GM10248 (cell line): ENCODE measurements at regions of chr10 and their contacts with region 1.

Region 1: DNA sequence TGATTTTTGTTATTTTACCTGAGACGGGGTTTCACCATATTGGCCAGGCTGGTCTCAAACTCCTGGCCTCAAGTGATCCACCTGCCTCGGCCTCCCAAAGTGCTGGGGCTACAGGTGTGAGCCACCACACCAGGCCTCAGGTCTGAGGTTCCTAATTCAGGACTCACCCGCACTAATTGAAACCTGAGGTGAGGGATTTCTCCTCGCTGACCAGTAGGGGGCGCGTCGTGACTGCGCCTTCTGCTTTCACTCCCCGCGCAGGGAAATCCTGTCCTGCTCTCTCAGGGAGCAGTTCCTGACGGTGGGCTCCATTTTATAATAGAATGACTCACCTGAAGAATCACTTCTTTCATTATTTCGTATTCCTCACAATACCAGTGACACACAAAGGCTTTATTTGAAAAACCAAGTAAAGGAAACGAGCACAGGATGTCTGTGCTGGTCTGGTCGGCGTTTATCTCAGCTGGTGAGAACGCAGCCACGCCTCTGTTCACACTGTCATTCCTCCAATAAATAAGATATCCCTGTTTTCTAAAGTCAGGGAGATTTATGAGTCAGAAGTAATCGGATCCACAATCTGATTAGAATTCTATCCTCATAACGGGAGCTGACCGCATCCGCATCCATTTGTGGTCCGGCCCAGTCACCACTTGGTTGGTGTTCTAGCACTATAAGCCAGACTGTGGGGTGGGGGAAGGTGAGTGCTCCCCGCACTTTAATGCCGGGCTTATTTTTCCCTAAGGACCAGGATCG is 35.4 kb downstream of the BAG3 start:
- DNase-seq: peak; percentile 81
- CTCF ChIP-seq: peak; percentile 92

Region 2: DNA sequence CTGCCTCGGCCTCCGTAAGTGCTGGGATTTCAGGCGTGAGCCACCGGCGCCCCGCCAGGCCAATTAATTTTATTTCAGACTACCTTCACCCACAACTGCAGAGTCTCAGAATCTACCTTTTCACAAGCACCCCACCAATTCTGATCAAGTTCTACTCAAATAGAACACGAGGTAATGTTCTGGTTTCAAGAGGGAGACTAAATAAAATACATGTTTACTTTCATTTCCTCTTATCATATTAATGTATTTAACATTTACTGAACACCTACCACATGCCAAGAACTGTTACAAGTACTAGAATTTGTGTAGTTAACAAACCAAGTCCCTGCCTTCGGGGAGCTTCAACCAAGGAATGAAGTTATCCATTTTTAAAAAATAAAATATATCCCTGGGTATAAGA is 118.6 kb before region 1 on chr10:
- CTCF ChIA-PET with region 1: no interaction called
- POLR2A ChIA-PET with region 1: no interaction called
- DNase-seq: peak; percentile 25
- CTCF ChIP-seq: no peak

Region 3: GRCh38 chr10:119670717-119671116 is 15.9 kb before region 1 on chr10:
- CTCF ChIA-PET with region 1: interaction called, 27 read pairs
- POLR2A ChIA-PET with region 1: no interaction called
- DNase-seq: no peak
- CTCF ChIP-seq: no peak

Region 4: GRCh38 chr10:119715628-119716505 is 29.3 kb after region 1 on chr10:
- CTCF ChIA-PET with region 1: interaction called, 31 read pairs
- POLR2A ChIA-PET with region 1: no interaction called
- DNase-seq: no peak
- CTCF ChIP-seq: no peak

Region 5: GRCh38 chr10:119737827-119738226 is 51.2 kb after region 1 on chr10:
- CTCF ChIA-PET with region 1: interaction called, 22 read pairs
- POLR2A ChIA-PET with region 1: no interaction called
- DNase-seq: no peak
- CTCF ChIP-seq: no peak

Region 6: GRCh38 chr10:119750391-119751230 is 64.0 kb after region 1 on chr10:
- CTCF ChIA-PET with region 1: interaction called, 30 read pairs
- POLR2A ChIA-PET with region 1: no interaction called
- DNase-seq: peak; percentile 62
- CTCF ChIP-seq: peak; percentile 82

Region 7: DNA sequence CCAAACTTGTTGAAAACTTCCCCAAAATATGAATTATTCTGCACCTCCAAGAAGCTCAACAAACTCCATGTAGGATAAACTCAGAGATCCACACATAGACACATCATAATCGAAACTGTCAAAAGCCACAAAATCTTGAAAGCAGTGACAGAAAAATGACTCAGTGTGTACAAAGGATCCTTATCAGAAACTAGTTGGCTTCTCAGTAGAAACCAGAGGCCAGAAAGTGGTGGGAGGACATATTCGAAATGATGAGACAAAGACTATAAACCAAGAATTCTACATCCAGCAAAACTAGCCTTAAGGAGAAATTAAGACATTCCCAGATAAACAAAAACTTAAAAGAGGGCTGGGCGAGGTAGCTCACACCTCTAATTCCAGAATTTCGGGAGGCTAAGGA is 147.6 kb after region 1 on chr10:
- CTCF ChIA-PET with region 1: interaction called, 11 read pairs
- POLR2A ChIA-PET with region 1: no interaction called
- DNase-seq: no peak
- CTCF ChIP-seq: no peak

Region 8: GRCh38 chr10:120336911-120337540 is 650.4 kb after region 1 on chr10:
- CTCF ChIA-PET with region 1: interaction called, 19 read pairs
- POLR2A ChIA-PET with region 1: no interaction called
- DNase-seq: peak; percentile 28
- CTCF ChIP-seq: peak; percentile 79